PC-9 (cell line): ENCODE measurements at regions of chr7 and their contacts with region 1.

Region 1: DNA sequence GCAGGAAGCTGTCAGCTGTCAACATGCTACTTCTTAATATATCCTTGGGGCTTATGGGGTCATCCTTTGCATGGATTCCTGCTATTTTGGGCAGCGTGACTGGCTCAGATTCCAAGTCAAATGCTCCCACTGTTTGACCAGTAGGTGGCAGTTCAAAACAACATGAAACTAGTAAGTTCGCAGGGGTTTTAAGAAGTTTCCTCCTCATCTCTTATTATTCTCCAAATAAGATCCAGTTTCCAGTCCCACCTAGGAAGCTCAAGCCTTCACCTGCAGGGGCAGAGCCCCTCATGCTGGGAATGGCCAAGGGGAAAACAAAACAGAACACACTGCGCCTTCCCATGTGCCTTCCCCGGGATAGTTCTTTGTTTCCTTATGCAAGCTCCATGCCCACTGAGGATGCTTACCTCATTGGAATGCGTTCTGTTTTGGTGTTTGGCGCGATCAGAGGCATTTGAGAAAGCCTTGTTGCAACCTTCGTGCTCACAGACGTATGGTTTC is 259.8 kb downstream of the GLI3 start:
- DNase-seq: peak in 1 of 2 experiments; percentile 14
- H3K4me3 ChIP-seq: no peak overlapping the region
- H3K27ac ChIP-seq: no peak overlapping the region
- H3K4me1 ChIP-seq: no peaks in the 10 kb centered on the region
- H3K27me3 ChIP-seq: peaks cover 83% of the 10 kb centered on the region
- CTCF ChIP-seq: peak; percentile 83

Region 2: GRCh38 chr7:41855798-41856197 is 121.4 kb before region 1 on chr7:
- CTCF ChIA-PET with region 1: no interaction called
- POLR2A ChIA-PET with region 1: no interaction called
- intact Hi-C with region 1: no loop called
- DNase-seq: no peak
- H3K4me3 ChIP-seq: no peak overlapping the region
- H3K27ac ChIP-seq: no peak overlapping the region
- H3K4me1 ChIP-seq: no peaks in the 10 kb centered on the region
- H3K27me3 ChIP-seq: peaks cover 17% of the 10 kb centered on the region; the same call in 1 of the 2 replicates
- CTCF ChIP-seq: no peak

Region 3: DNA sequence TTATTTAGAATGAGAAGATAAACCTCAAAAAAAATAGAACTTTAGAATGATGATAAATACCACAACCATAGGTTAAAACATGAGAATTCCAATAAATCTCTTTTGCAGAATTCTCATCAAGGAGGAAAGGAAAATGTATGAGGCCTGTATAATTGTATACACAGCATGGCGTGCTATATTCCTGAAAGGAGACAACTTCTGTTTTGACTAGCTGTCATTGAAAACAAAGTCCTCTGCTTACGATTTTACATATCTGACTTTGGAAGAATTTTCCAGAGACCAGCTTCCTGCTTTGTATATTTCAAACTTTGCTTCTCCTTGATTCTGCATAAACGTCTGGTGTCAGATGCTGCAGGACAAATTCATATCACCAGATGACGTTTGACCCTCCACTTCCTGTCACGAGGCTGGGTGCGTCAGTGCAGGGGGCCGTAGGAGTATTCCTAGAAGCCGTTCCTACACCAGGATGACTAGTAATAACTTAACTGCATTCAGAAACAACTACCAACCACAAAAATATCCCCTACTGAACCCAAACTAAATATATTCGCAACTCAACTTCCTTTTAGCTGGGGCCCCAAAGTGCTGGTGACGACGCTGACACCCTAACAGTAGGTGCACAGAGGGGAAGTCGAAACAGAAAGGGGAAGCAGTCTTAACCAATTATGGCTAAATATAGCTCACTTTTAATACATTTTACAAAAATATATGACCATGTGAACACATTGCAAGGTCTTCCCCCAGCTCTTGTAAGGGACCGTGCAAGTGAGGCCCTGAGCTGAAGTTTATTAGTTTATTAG is 95.7 kb before region 1 on chr7:
- CTCF ChIA-PET with region 1: no interaction called
- POLR2A ChIA-PET with region 1: no interaction called
- intact Hi-C with region 1: no loop called
- DNase-seq: no peak
- H3K4me3 ChIP-seq: no peak overlapping the region
- H3K27ac ChIP-seq: no peak overlapping the region
- H3K4me1 ChIP-seq: no peaks in the 10 kb centered on the region
- H3K27me3 ChIP-seq: no peaks in the 10 kb centered on the region
- CTCF ChIP-seq: no peak

Region 4: GRCh38 chr7:42831718-42832431 is 854.7 kb after region 1 on chr7:
- CTCF ChIA-PET with region 1: no interaction called
- POLR2A ChIA-PET with region 1: no interaction called
- intact Hi-C with region 1: loop called (anchors 5 kb)
- DNase-seq: peak in 1 of 2 experiments; percentile 18
- H3K4me3 ChIP-seq: no peak overlapping the region
- H3K27ac ChIP-seq: no peak overlapping the region
- H3K4me1 ChIP-seq: 0 out of 2 replicates have a peak, but pooled peaks cover 4% of the 10 kb centered on the region
- H3K27me3 ChIP-seq: peaks cover 48% of the 10 kb centered on the region
- CTCF ChIP-seq: peak; percentile 63

Region 5: DNA sequence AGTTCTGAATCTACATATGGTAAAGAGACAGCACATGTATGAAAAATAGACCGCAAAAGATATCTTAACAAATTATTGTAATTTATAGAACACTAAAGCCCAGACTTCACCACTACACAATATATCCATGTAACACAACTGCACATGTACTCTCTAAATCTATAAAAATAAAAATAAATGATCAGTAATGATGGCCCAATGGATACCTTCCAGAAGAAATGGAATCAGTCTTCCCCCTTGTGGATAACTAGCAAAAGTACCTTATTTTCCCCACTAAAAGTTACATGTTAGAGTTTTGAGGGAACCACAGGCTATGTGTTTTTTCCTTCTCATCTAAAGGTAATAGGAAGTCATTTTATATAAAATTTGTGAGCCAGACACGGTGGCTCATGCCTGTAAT is 908.9 kb after region 1 on chr7:
- CTCF ChIA-PET with region 1: no interaction called
- POLR2A ChIA-PET with region 1: no interaction called
- intact Hi-C with region 1: loop called (anchors 5 kb)
- DNase-seq: no peak
- H3K4me3 ChIP-seq: no peak overlapping the region
- H3K27ac ChIP-seq: no peak overlapping the region
- H3K4me1 ChIP-seq: peaks cover 38% of the 10 kb centered on the region
- H3K27me3 ChIP-seq: no peaks in the 10 kb centered on the region
- CTCF ChIP-seq: peak; percentile 58